A549 (cell line): ENCODE measurements at regions of chr15 and their contacts with region 1.

Region 1: DNA sequence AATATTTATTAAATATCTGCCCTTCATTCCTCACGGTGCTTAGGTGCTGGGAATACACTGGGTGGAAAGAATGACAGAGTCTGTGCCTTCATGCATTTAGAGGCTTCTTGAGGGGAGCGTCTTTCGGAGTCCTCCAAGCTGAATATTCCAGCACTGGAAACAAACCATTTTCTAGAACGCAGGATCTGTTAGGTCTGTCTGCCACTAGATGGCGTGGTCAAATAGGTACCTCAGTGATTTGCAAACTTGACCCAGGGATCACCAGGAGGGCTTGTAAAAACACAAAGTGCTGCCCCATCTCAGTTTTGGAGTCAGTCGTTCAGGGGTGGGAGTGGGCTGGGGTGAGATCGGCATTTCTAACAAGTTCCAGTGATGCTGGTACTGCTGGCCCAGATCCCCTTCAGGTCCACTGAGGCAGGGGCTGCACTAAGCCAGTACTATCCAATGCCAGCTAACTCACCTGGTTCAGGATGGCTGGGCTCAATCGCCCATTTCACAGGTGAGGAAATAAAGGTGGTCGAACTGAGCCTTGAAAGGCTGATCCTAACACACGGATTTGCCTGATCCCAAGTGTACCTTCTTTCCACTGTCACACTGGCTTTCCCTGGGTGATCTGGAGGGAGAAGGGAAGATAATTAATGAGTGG is 14.8 kb downstream of the ARNT2 start:
- DNase-seq: peak; percentile 56 to 73
- ATAC-seq: peak; percentile 58 to 88; a peak in 3 of 6 replicates
- H3K4me3 ChIP-seq: no peak overlapping the region
- H3K27ac ChIP-seq: peak overlapping the region in 1 of 2 experiments; percentile 68; a peak in 3 of 6 replicates
- H3K4me1 ChIP-seq: peaks cover 24% of the 10 kb centered on the region
- CTCF ChIP-seq: peak; percentile 85
- EP300 ChIP-seq: no peak
- POLR2A ChIP-seq: no peak
- RAD21 ChIP-seq: peak; percentile 58 to 60

Region 2: DNA sequence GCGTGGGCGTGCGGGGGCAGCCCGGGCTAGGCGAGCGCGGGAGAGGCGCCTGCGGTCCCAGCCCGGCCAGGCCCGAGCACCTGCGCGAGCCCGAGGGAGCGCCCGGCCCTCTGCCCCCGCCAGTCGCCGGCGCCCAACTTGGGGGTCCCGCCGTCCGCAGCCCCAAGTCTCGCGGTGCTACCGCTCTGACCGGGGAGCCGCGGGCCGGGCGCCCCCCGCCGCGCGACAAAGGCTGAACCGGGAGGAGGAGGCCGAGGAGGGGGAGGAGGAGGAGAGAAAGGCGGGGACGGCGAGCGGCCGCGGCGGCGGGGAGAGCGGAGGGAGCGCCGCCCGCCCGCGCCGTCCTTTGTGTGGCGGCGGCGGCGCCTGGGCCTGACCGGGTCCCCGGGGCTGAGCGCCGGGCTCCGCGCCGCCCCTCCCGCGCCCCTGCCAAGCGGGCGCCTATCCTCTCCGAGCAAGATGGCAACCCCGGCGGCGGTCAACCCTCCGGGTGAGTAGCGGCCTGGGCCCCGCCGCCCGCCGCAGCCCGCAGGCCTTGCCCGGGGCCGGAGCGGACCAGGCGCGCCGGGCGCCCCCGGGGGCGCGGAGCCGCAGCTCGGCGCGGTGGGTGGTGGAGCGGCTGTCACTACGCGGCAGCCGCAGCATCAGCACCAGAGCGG is 14.8 kb before region 1 on chr15 and contains the start of gene ARNT2:
- CTCF ChIA-PET with region 1: interaction called, 26 read pairs
- POLR2A ChIA-PET with region 1: no interaction called
- DNase-seq: peak; percentile 52 to 56
- ATAC-seq: peak; percentile 75 to 81
- H3K4me3 ChIP-seq: peak within 1 kb of the TSS; percentile 79
- H3K27ac ChIP-seq: peak within 1 kb of the TSS; percentile 73 to 96
- H3K4me1 ChIP-seq: peaks cover 10% of the 10 kb centered on the region
- CTCF ChIP-seq: no peak
- EP300 ChIP-seq: no peak
- POLR2A ChIP-seq: peak; percentile 24
- RAD21 ChIP-seq: no peak
- polyA plus RNA-seq, gene ARNT2: 17.0 and 25.3 TPM in 2 replicates

Region 3: GRCh38 chr15:80429964-80430363 is 10.9 kb after region 1 on chr15:
- CTCF ChIA-PET with region 1: interaction called, 21 read pairs
- POLR2A ChIA-PET with region 1: no interaction called
- DNase-seq: no peak
- ATAC-seq: no peak
- H3K4me3 ChIP-seq: no peak overlapping the region
- H3K27ac ChIP-seq: no peak overlapping the region
- H3K4me1 ChIP-seq: no peaks in the 10 kb centered on the region; the same call in 2 of the 3 replicates
- CTCF ChIP-seq: no peak
- EP300 ChIP-seq: no peak
- POLR2A ChIP-seq: no peak
- RAD21 ChIP-seq: no peak

Region 4: DNA sequence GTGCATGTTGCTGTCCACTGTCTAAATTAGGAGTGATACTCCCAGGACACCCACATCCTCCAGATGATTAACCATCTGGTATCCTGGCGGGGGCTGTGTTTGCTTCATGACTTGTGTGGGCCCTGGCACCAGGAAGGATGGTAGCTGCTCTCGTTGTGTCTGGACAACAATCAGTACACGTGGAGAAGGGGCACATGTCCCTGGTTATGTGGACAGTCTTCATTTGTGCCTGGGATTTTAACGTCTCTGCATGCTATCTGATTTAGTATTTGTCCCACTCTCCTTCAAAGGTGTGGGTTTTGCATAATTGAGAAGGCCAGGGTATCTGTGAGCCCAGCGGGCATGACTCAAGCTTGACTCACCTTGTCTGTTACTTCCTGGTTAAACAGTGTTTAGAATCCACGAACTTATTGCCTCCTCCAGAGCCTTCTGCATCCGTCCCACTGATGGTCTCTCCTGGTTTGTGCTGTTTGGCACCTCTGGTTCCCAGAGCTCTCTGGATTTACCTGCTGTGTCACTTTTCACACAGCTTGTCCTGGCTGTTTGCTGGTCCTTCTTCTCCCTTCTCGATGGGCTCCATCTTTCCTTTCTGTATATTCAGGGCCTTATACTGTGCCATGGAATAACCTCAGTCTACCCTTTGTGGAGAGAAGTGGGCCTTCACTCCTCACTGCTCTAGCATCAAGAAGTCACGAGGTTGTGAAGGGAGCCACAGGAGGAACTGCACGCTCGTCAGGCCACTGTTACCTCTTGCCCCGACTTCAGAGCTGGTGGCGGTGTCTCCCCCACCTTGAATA is 17.7 kb after region 1 on chr15:
- CTCF ChIA-PET with region 1: interaction called, 12 read pairs
- POLR2A ChIA-PET with region 1: no interaction called
- DNase-seq: peak; percentile 77 to 89
- ATAC-seq: peak; percentile 91 to 95
- H3K4me3 ChIP-seq: no peak overlapping the region
- H3K27ac ChIP-seq: peak overlapping the region; percentile 64 to 82
- H3K4me1 ChIP-seq: peaks cover 25% of the 10 kb centered on the region
- CTCF ChIP-seq: no peak
- EP300 ChIP-seq: no peak
- POLR2A ChIP-seq: no peak
- RAD21 ChIP-seq: no peak